AG04449 (cell line): ENCODE measurements at regions of chr2 and their contacts with region 1.

Region 1: GRCh38 chr2:10659898-10660568 is 29.7 kb downstream of the NOL10 start:
- DNase-seq: peak; percentile 50
- H3K4me3 ChIP-seq: no peak overlapping the region
- CTCF ChIP-seq: peak; percentile 81

Region 2: DNA sequence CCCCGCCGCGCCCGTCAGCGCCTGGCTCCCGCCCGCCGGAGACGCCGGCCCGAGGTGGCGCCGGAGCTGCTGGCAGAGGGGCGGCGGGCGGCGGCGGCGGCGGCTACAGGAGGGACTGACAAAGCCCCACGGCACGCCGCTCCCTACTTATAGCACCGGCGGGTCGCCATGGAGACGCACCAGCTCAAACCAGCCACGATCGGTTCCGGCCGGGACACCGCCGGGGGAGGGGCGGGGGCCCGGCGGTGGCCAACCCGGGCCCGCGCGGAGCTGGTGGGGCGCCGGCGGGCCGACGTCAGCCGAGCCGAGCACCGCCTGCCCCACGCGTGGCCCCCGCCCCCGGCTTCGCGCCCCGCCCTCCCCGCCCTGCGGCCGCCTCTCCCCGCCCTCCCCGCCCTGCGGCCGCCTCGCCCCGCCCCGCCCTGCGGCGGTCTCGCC is 211.8 kb before region 1 on chr2 and contains the start of gene ODC1:
- CTCF ChIA-PET with region 1: interaction called, 67 read pairs
- POLR2A ChIA-PET with region 1: interaction called, 9 read pairs
- DNase-seq: peak; percentile 31
- H3K4me3 ChIP-seq: peak within 1 kb of the TSS; percentile 72
- CTCF ChIP-seq: no peak

Region 3: GRCh38 chr2:10620481-10620880 is 39.6 kb before region 1 on chr2:
- CTCF ChIA-PET with region 1: no interaction called
- POLR2A ChIA-PET with region 1: no interaction called
- DNase-seq: peak; percentile 73
- H3K4me3 ChIP-seq: no peak overlapping the region
- CTCF ChIP-seq: no peak